HepG2 (cell line): ENCODE measurements at regions of chr12 and their contacts with region 1.

Region 1: DNA sequence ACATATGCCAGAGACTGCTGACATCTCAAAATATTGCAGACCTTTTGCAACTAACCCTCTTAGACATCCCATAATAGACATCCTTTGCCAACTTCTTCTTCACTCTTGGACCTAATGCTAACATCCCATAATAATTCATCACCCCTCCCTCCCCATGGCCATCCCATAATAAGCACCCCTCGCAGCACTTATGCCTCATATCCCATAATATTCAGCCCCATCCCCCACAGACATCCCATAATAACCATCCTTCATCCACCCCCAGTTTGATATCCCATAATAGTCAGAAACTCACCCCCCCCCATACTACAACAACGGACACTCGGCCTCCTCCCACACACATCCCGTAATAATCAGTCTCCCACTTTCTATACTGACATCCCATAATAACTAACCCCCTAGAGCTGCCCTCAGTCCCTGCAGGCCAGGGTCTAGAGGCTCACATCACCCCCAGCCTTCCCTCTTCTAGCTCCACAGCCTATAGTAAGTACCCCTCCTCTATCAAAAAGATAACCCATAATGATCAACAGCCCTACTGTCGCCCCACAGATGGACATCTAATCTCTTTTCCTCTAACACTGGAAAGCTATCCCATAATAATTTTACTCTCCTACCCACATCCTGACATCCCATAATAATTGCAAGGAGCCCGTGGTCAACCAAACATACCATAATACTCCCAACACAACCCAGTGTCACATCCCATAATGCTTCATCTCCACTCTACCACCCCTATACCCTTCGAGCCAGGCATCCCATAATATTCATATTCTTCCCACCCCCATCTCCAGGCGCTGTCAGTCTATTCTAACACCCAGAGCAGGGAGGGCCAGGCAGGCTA is 792 bp upstream of the CHD4 start:
- DNase-seq: peak; percentile 56
- ATAC-seq: peak; percentile 17
- H3K4me3 ChIP-seq: no peak overlapping the region
- H3K27ac ChIP-seq: no peak overlapping the region
- H3K4me1 ChIP-seq: peaks cover 58% of the 10 kb centered on the region
- H3K27me3 ChIP-seq: no peaks in the 10 kb centered on the region; a peak in 1 of 5 replicates
- CTCF ChIP-seq: no peak
- EP300 ChIP-seq: no peak
- POLR2A ChIP-seq: no peak
- RAD21 ChIP-seq: no peak

Region 2: GRCh38 chr12:6569312-6569711 is 38.7 kb before region 1 on chr12:
- CTCF ChIA-PET with region 1: interaction called, 3 read pairs
- POLR2A ChIA-PET with region 1: interaction called, 11 read pairs
- in situ Hi-C with region 1: no loop called
- intact Hi-C with region 1: loop called (anchors 2 kb)
- DNase-seq: no peak
- ATAC-seq: no peak
- H3K4me3 ChIP-seq: no peak overlapping the region
- H3K27ac ChIP-seq: peak overlapping the region; percentile 46
- H3K4me1 ChIP-seq: peaks cover 38% of the 10 kb centered on the region
- H3K27me3 ChIP-seq: no peaks in the 10 kb centered on the region
- CTCF ChIP-seq: no peak
- EP300 ChIP-seq: no peak
- POLR2A ChIP-seq: 0 out of 4 replicates have a peak, but pooled peaks of 1 of the 2 experiments have one; percentile 3
- RAD21 ChIP-seq: no peak